ENCODE measurements at regions of chr2 and their contacts with region 1.

Region 1: GRCh38 chr2:205776139-205776538 is 93.8 kb downstream of the NRP2 start:
- DNase-seq: peak; percentile 56
- ATAC-seq: peak; percentile 65 to 76

Region 2: GRCh38 chr2:205885492-205886099 is 109.5 kb after region 1 on chr2:
- intact Hi-C with region 1: loop called in 1 of 2 experiments (anchors 2 kb)
- DNase-seq: peak; percentile 88
- ATAC-seq: peak; percentile 89 to 95

Measured in left cardiac atrium (tissue), 4 donors.